GM12878 (cell line): ENCODE measurements at regions of chr16 and their contacts with region 1.

Region 1: DNA sequence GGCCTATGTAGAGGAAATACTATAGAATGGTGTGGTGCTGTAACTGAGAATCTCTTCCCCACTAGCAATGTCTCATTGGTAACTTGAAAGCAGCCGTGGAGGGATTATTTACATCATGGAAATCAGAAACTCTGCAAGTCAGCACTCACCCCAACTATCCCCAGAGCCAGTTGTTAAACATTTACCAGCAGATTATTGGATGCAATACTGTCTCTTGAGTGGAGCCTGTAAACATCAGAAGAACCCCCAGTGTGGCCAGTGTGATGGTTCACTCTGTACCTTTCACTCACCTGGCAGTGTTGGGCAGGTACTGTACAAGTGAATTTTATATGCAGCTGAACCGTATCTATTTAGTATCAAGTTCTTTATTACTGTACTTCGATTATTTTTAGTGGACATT is 299.8 kb upstream of the SALL1 start:
- DNase-seq: no peak
- ATAC-seq: no peak
- H3K4me3 ChIP-seq: no peak overlapping the region
- H3K27ac ChIP-seq: no peak overlapping the region
- H3K4me1 ChIP-seq: no peaks in the 10 kb centered on the region
- H3K27me3 ChIP-seq: no peaks in the 10 kb centered on the region
- CTCF ChIP-seq: no peak
- EP300 ChIP-seq: no peak
- POLR2A ChIP-seq: no peak
- RAD21 ChIP-seq: no peak

Region 2: GRCh38 chr16:51440131-51440889 is 10.6 kb before region 1 on chr16:
- CTCF ChIA-PET with region 1: interaction called, 13 read pairs
- POLR2A ChIA-PET with region 1: no interaction called
- RAD21 ChIA-PET with region 1: no interaction called
- SMC1A ChIA-PET with region 1: interaction called, 4 read pairs
- in situ Hi-C with region 1: no loop called
- intact Hi-C with region 1: no loop called
- DNase-seq: no peak
- ATAC-seq: no peak
- H3K4me3 ChIP-seq: no peak overlapping the region
- H3K27ac ChIP-seq: no peak overlapping the region
- H3K4me1 ChIP-seq: no peaks in the 10 kb centered on the region
- H3K27me3 ChIP-seq: no peaks in the 10 kb centered on the region; a peak in 1 of 4 replicates
- CTCF ChIP-seq: no peak
- EP300 ChIP-seq: no peak
- POLR2A ChIP-seq: no peak
- RAD21 ChIP-seq: no peak